ENCODE measurements at regions of chr5 and their contacts with region 1.

Region 1: DNA sequence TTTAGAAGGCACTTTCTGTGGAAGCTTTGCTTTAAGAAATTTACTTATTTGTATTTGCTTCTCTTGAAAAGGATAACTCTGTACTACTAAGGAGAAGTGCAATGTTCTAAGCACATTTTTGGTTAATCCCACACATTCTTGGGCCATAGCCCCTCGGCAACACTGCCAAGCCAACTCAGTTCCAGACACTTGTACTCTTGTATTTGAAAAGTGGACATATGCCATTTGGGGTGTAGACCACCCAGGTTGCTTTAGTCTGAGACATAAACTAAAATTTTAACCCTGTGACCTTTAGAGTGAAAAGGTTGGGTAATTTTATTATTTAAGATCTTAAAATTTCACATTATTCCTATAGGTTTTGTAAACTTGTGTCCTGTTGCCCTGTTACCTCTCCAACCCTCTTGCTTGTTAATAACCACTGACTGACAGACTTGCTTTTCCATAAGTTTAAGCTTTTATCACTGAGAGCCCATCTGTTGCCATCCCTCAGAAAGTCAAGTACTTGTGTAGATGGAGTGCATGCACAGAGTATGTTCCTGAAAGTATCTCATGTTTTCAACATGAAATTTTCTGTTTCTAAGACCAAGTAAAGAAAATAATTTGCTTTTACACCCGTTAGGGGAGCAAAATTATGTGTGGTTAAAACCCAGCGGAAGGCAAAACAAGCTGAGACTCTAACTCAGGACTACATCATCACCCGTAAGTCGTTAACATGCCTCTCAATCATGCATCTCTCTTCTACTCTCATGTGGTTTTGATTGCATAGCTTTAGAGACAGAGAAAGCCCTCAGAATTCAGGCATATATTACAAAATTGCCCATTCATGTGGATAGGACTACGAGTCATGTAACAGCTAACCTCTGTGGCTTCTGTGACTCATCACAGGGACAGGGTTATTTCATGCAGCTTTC is 117.3 kb downstream of the GDNF start:
- DNase-seq: peak; percentile 71
- ATAC-seq: peak; percentile 95
- H3K4me3 Mint-ChIP-seq: no peak overlapping the region
- H3K27ac Mint-ChIP-seq: peak overlapping the region; percentile 48
- H3K4me1 Mint-ChIP-seq: peaks cover 34% of the 10 kb centered on the region
- H3K27me3 Mint-ChIP-seq: no peaks in the 10 kb centered on the region

Region 2: GRCh38 chr5:37111426-37112382 is 610.8 kb before region 1 on chr5:
- CTCF ChIA-PET with region 1: no interaction called
- POLR2A ChIA-PET with region 1: no interaction called
- intact Hi-C with region 1: loop called (anchors 5 kb)
- DNase-seq: peak; percentile 23
- ATAC-seq: peak; percentile 75
- H3K4me3 Mint-ChIP-seq: peak overlapping the region; percentile 24
- H3K27ac Mint-ChIP-seq: peak overlapping the region; percentile 65
- H3K4me1 Mint-ChIP-seq: peaks cover 35% of the 10 kb centered on the region
- H3K27me3 Mint-ChIP-seq: peaks cover 11% of the 10 kb centered on the region

Region 3: DNA sequence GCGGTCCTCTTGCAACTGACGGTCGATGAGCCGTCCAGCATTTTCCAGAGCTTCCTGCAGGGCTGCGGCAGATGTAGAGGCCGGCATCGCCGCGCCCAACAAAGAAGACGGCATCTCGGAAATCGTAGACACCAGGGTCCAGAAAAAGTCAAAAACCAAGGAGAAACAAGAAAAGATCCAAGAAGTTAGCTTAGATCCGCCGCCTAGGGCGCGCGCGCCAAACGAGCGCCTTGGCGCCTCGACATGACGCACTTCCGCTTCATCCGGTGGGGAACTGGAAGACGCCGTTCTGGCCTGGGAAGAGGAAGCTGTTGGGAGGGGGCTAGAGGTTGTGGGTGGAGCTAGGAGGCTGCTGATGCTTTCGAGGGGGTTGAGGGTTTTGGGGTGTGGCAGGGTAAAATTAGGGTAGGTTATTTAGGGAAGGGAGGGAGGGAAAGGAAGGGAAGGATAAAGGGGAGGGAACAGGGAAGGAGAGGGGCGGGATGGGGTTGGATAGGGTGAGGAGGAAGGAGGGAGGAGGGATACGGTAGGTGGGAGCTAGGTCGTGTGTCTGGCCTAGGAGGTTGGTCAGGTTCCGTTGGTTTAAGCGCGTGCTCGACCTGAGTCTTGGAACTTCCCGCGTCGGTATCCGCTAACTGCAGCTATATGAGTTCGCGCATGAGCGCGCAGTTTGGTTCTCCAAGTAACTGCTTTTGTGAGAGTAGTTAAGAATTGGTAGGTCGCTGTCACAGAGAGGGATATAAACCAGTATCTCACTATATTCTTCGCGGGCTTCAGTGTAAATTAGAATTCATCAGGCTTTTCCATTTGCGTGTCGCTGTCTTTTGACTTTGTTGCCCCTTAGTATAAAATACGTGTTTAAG is 351.4 kb before region 1 on chr5 and contains the start of gene NUP155:
- CTCF ChIA-PET with region 1: no interaction called
- POLR2A ChIA-PET with region 1: no interaction called
- intact Hi-C with region 1: loop called in 1 of 2 experiments (anchors 1 kb)
- DNase-seq: peak; percentile 95
- ATAC-seq: peak; percentile 95
- H3K4me3 Mint-ChIP-seq: peak within 1 kb of the TSS; percentile 98
- H3K27ac Mint-ChIP-seq: peak within 1 kb of the TSS; percentile 99
- H3K4me1 Mint-ChIP-seq: peaks cover 35% of the 10 kb centered on the region
- H3K27me3 Mint-ChIP-seq: no peaks in the 10 kb centered on the region
- total RNA-seq, gene NUP155: 94.9 to 113 TPM

Region 4: GRCh38 chr5:37448941-37449340 is 273.6 kb before region 1 on chr5:
- CTCF ChIA-PET with region 1: no interaction called
- POLR2A ChIA-PET with region 1: no interaction called
- intact Hi-C with region 1: loop called (anchors 1 to 5 kb)
- DNase-seq: no peak
- ATAC-seq: no peak
- H3K4me3 Mint-ChIP-seq: no peak overlapping the region
- H3K27ac Mint-ChIP-seq: no peak overlapping the region
- H3K4me1 Mint-ChIP-seq: peaks cover 5% of the 10 kb centered on the region
- H3K27me3 Mint-ChIP-seq: no peaks in the 10 kb centered on the region

Region 5: DNA sequence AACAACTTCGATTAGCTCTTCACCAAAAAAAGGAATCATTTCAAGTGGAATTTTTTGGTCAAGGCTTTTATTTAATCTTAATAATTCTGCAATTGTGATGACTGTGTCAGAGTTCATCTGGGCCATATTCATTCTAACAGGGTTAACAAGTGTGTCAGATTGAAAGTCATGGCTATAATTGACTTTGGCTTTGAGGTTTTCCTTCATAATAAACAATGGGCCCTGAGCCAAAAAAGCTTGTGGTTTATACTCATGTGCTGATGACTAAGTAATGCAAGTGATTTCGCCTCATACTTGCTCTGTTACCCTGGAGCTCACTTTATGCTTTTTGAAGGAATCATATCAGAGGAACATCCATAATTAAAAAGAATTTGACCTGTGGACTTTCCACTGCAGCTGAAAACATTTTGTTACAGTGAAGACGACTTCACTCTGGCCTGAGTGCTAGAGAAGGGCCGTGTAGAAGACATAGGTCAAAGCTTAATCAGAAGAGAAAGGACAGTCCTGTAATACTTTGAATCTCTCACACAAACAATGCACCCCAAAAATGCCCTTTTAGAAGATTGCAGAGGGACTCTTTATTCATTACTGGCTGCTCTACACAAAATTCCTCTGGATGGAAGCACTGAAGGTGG is 15.7 kb after region 1 on chr5:
- CTCF ChIA-PET with region 1: interaction called, 10 read pairs
- POLR2A ChIA-PET with region 1: interaction called, 6 read pairs
- intact Hi-C with region 1: loop called (anchors 1 kb)
- DNase-seq: peak; percentile 13
- ATAC-seq: peak; percentile 84
- H3K4me3 Mint-ChIP-seq: no peak overlapping the region
- H3K27ac Mint-ChIP-seq: no peak overlapping the region
- H3K4me1 Mint-ChIP-seq: peaks cover 23% of the 10 kb centered on the region
- H3K27me3 Mint-ChIP-seq: no peaks in the 10 kb centered on the region

Region 6: GRCh38 chr5:38780950-38781349 is 1058.5 kb after region 1 on chr5:
- CTCF ChIA-PET with region 1: no interaction called
- POLR2A ChIA-PET with region 1: no interaction called
- intact Hi-C with region 1: no loop called
- DNase-seq: no peak
- ATAC-seq: no peak
- H3K4me3 Mint-ChIP-seq: no peak overlapping the region
- H3K27ac Mint-ChIP-seq: no peak overlapping the region
- H3K4me1 Mint-ChIP-seq: no peaks in the 10 kb centered on the region
- H3K27me3 Mint-ChIP-seq: peaks cover 4% of the 10 kb centered on the region

Region 7: DNA sequence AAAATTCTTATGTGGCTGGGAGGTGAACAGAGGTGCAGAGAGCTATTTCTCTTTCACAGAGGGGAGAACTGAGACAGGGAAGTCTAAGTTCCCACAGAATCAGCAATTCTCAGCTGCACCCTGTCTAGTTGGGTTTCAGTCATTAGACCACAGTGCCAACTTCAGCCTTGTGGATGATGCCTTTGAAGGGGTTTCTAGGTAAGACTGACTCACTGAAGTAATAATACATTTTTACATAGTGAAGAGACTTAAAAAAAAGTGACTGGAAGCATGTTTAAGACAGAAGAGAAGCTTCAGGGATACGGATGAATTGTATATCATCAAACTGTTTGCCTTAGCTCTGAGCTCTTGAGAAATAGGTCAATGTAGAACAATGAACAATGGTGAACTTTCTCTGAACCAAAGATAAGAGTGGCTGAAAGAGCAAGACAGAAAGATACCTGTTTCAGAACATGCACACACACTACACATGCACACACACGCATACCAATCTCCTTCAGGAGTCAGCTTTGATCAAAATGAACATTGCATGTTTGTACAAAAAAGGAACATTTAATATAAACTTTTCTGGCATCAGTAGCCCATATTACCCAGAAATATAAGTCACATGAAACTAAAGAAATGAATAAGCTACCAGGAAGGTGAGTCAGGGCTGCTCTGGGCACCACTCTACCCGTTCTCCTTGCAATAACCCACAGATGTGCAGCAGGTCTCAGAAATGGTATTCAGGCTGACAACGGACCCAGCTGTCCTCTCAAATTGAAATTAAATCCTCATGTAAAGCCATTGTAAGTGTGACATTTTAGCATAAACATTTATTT is 1509.4 kb after region 1 on chr5:
- CTCF ChIA-PET with region 1: no interaction called
- POLR2A ChIA-PET with region 1: no interaction called
- intact Hi-C with region 1: loop called in 1 of 2 experiments (anchors 10 kb)
- DNase-seq: peak; percentile 76
- ATAC-seq: peak; percentile 93
- H3K4me3 Mint-ChIP-seq: peak overlapping the region; percentile 59
- H3K27ac Mint-ChIP-seq: peak overlapping the region; percentile 94
- H3K4me1 Mint-ChIP-seq: peaks cover 13% of the 10 kb centered on the region
- H3K27me3 Mint-ChIP-seq: no peaks in the 10 kb centered on the region

Measured in activated CD4-positive, alpha-beta T cell treated with anti-CD3 and anti-CD28 coated beads for 36 hours (primary cell).